Endothelial cell of umbilical vein (primary cell): ENCODE measurements at regions of chr12 and their contacts with region 1.

Region 1: DNA sequence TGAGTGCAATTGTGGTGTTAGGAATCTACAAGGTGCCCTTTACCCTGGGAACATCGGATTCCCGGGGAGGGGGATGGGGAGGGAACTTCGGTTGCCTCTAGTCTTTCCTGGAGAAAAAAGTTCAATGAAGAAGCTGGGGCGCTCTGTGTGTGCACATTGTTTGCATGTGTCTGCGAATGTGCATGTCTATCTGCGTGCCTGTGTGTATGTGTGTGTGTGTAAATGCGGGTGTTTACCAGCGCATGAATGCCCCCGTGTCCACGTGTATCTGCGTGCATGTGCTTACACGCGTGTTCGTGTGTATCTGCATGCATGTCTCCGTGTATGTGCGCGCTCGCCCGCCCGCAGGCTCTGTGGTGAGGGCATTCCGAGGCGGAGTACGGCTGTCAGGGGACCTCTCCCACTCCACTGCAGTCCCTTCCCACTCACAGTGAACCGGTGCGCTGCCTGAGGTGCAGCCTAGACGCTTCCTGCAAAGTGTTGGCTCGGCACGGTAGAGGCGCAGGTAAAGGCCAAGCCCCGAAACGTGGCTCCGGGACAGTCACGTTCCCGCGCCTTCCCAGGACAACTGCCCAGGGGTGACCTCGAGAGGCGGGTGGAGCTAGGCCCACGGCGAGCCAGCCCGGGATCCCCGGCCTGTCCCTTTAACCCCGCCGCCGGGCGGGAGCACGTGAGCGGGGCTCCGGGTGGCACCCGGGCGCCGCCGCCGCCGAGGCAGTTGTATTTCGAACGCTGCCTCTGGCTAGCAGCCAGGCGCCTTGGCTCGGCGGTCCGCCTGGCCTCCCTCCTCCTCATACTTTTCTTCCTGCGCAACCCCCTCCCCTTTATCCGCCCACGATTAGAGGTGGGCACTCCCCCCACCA is 539 bp upstream of the HMGA2 start:
- DNase-seq: peak; percentile 60
- H3K4me3 ChIP-seq: peak overlapping the region; percentile 58 to 97 (median 71)
- H3K27ac ChIP-seq: peak overlapping the region; percentile 71
- H3K4me1 ChIP-seq: peaks cover 31% of the 10 kb centered on the region
- H3K27me3 ChIP-seq: no peaks in the 10 kb centered on the region
- CTCF ChIP-seq: no peak
- POLR2A ChIP-seq: no peak

Region 2: GRCh38 chr12:65306366-65307168 is 517.2 kb before region 1 on chr12:
- CTCF ChIA-PET with region 1: no interaction called
- POLR2A ChIA-PET with region 1: no interaction called
- dilution Hi-C with region 1: no loop called
- intact Hi-C with region 1: loop called (anchors 2 kb)
- DNase-seq: peak; percentile 83
- H3K4me3 ChIP-seq: peak overlapping the region in 1 of 3 experiments; percentile 44
- H3K27ac ChIP-seq: peak overlapping the region; percentile 96
- H3K4me1 ChIP-seq: peaks cover 46% of the 10 kb centered on the region
- H3K27me3 ChIP-seq: no peaks in the 10 kb centered on the region
- CTCF ChIP-seq: peak; percentile 51 to 53
- POLR2A ChIP-seq: no peak

Region 3: GRCh38 chr12:65556681-65557437 is 266.9 kb before region 1 on chr12:
- CTCF ChIA-PET with region 1: interaction called, 11 read pairs
- POLR2A ChIA-PET with region 1: no interaction called
- dilution Hi-C with region 1: no loop called
- intact Hi-C with region 1: loop called (anchors 1 kb)
- DNase-seq: peak; percentile 88
- H3K4me3 ChIP-seq: no peak overlapping the region
- H3K27ac ChIP-seq: peak overlapping the region; percentile 47
- H3K4me1 ChIP-seq: peaks cover 17% of the 10 kb centered on the region
- H3K27me3 ChIP-seq: no peaks in the 10 kb centered on the region
- CTCF ChIP-seq: peak; percentile 88 to 96
- POLR2A ChIP-seq: no peak

Region 4: GRCh38 chr12:65728848-65729793 is 94.6 kb before region 1 on chr12:
- CTCF ChIA-PET with region 1: no interaction called
- POLR2A ChIA-PET with region 1: no interaction called
- dilution Hi-C with region 1: no loop called
- intact Hi-C with region 1: loop called (anchors 5 kb)
- DNase-seq: peak; percentile 37
- H3K4me3 ChIP-seq: peak overlapping the region; percentile 42 to 57 (median 53)
- H3K27ac ChIP-seq: no peak overlapping the region
- H3K4me1 ChIP-seq: peaks cover 6% of the 10 kb centered on the region
- H3K27me3 ChIP-seq: peaks cover 2 to 37% of the 10 kb centered on the region in 2 experiments
- CTCF ChIP-seq: no peak
- POLR2A ChIP-seq: no peak

Region 5: GRCh38 chr12:65765436-65765813 is 58.3 kb before region 1 on chr12:
- CTCF ChIA-PET with region 1: no interaction called
- POLR2A ChIA-PET with region 1: no interaction called
- dilution Hi-C with region 1: no loop called
- intact Hi-C with region 1: no loop called
- DNase-seq: peak; percentile 54
- H3K4me3 ChIP-seq: no peak overlapping the region
- H3K27ac ChIP-seq: no peak overlapping the region
- H3K4me1 ChIP-seq: peaks cover 2% of the 10 kb centered on the region
- H3K27me3 ChIP-seq: no peaks in the 10 kb centered on the region
- CTCF ChIP-seq: no peak
- POLR2A ChIP-seq: no peak

Region 6: DNA sequence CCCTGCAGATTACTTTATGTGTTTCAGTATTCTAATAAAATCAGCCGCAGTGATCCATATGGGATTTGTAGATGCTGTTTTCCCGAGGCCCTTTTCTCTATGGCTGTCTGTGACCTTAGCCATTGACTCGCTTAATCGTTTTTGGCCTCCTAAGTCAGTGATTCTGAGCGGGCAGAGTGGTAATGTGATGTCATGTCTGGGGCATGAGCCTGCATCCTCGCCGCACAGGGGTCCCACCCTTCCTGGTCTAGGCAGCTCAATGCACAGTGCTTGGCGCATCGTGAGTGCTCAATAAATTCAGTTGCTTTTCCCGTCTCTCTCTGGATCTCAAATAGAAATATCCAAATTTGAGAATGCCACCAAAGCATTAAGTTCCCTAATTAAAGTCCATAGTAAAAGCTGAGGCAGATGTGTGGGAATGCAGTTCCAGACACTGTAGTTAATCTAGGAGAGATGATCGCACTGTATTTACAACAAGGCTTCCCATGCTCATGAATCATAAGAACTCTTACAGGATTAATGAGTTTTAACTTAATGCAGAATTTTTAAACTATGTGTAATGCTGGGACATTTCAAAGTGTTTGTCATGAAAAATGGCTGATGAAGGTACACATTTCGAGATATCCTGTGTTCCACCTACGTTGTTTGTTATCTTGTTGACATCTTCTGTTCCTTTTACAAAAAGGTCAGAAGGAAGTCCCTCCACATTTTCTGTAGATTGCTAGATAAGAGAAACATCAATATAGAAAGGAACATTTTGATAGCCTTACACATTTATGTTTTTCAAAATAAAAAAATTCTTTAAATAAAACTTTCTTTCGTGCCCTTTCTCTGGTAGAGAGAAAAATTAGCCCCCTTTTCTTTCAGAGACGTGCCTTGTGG is 30.0 kb after region 1 on chr12:
- CTCF ChIA-PET with region 1: interaction called, 3 read pairs
- POLR2A ChIA-PET with region 1: no interaction called
- dilution Hi-C with region 1: no loop called
- intact Hi-C with region 1: loop called (anchors 2 kb)
- DNase-seq: peak; percentile 62
- H3K4me3 ChIP-seq: no peak overlapping the region
- H3K27ac ChIP-seq: peak overlapping the region; percentile 70
- H3K4me1 ChIP-seq: peaks cover 52% of the 10 kb centered on the region
- H3K27me3 ChIP-seq: no peaks in the 10 kb centered on the region
- CTCF ChIP-seq: no peak
- POLR2A ChIP-seq: no peak

Region 7: DNA sequence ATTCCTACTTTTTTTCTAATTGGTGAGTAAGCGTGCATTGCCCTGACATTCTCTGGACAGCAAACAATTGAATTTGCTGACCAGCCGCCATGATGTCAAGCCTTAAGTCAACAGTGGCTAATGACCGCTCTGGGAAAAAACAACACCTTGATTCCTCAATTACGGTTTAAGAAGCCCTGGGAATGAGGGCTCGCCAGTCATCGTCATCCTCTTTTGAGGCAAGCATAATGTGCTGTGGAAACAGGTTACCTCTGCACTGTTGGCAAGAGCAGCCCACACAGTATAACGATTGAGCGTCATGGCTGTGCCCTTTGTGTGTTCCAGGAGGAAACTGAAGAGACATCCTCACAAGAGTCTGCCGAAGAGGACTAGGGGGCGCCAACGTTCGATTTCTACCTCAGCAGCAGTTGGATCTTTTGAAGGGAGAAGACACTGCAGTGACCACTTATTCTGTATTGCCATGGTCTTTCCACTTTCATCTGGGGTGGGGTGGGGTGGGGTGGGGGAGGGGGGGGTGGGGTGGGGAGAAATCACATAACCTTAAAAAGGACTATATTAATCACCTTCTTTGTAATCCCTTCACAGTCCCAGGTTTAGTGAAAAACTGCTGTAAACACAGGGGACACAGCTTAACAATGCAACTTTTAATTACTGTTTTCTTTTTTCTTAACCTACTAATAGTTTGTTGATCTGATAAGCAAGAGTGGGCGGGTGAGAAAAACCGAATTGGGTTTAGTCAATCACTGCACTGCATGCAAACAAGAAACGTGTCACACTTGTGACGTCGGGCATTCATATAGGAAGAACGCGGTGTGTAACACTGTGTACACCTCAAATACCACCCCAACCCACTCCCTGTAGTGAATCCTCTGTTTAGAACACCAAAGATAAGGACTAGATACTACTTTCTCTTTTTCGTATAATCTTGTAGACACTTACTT is 139.4 kb after region 1 on chr12:
- CTCF ChIA-PET with region 1: no interaction called
- POLR2A ChIA-PET with region 1: no interaction called
- dilution Hi-C with region 1: no loop called
- intact Hi-C with region 1: loop called (anchors 5 kb)
- DNase-seq: peak; percentile 85
- H3K4me3 ChIP-seq: no peak overlapping the region
- H3K27ac ChIP-seq: peak overlapping the region; percentile 70
- H3K4me1 ChIP-seq: peaks cover 36% of the 10 kb centered on the region
- H3K27me3 ChIP-seq: no peaks in the 10 kb centered on the region
- CTCF ChIP-seq: peak; percentile 7 to 11
- POLR2A ChIP-seq: no peak